ENCODE measurements at regions of chr15 and their contacts with region 1.

Region 1: DNA sequence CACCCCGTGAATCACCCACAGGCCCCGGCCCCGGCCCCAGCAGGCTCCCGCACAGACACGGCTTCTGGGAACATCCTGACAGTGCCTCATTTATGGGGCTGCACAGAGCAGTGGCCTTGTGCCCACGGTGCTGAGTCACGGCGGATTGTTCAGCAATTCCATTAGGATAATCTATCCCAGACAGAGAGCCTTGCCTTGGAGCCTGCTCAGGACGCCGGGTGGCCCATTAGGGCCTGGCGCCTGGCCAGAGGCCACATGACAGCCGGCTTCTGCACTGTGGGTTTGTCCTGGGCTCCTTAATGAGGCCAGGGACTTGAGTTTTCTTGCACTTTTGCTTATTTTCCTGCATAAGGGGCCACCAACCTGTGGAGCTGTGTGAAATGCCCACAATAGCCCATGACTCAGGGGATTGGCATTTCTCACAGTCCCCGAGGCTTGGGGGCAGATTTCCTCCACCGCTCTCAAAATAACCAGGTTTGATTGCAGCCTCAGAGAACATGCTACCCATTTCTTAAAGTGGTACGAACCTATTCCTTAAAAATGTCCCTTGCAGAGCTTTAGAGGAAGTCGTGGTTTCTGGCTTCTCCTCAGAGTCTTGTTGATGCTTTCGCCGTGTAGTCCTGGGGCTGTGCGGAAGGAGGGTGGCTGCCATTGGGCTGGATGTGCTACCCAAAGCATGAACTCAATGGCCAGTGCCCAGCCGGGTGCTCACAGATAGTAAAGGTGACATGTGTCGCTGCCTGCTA is 19.0 kb downstream of the SYNM start:
- DNase-seq: peak; percentile 86
- ATAC-seq: peak; percentile 91
- H3K4me3 ChIP-seq: peak overlapping the region; percentile 27 to 51
- H3K27ac ChIP-seq: peak overlapping the region; percentile 99
- H3K4me1 ChIP-seq: peaks cover 31 to 39% of the 10 kb centered on the region in 2 experiments
- H3K27me3 ChIP-seq: no peaks in the 10 kb centered on the region
- CTCF ChIP-seq: no peak
- POLR2A ChIP-seq: no peak
- RAD21 ChIP-seq: no peak; the same call in 1 of the 2 replicates

Region 2: GRCh38 chr15:99059010-99059981 is 64.6 kb before region 1 on chr15:
- CTCF ChIA-PET with region 1: no interaction called
- POLR2A ChIA-PET with region 1: no interaction called
- RAD21 ChIA-PET with region 1: no interaction called
- intact Hi-C with region 1: loop called (anchors 1 kb)
- DNase-seq: peak; percentile 6
- ATAC-seq: peak; percentile 96
- H3K4me3 ChIP-seq: peak overlapping the region; percentile 28 to 39; a peak in 2 of 4 replicates
- H3K27ac ChIP-seq: no peak overlapping the region
- H3K4me1 ChIP-seq: peaks cover 0 to 9% of the 10 kb centered on the region in 2 experiments; a peak in 1 of 4 replicates
- H3K27me3 ChIP-seq: peaks cover 5% of the 10 kb centered on the region; the same call in 1 of the 2 replicates
- CTCF ChIP-seq: peak; percentile 14 to 58 (median 57); a peak in 4 of 6 replicates
- POLR2A ChIP-seq: no peak
- RAD21 ChIP-seq: peak; percentile 43

Region 3: GRCh38 chr15:99213187-99213811 is 89.4 kb after region 1 on chr15:
- CTCF ChIA-PET with region 1: no interaction called
- POLR2A ChIA-PET with region 1: no interaction called
- RAD21 ChIA-PET with region 1: no interaction called
- intact Hi-C with region 1: loop called (anchors 5 kb)
- DNase-seq: peak; percentile 32
- ATAC-seq: peak; percentile 86
- H3K4me3 ChIP-seq: no peak overlapping the region
- H3K27ac ChIP-seq: no peak overlapping the region
- H3K4me1 ChIP-seq: no peaks in the 10 kb centered on the region
- H3K27me3 ChIP-seq: no peaks in the 10 kb centered on the region
- CTCF ChIP-seq: peak; percentile 85 to 97 (median 93)
- POLR2A ChIP-seq: no peak
- RAD21 ChIP-seq: peak; percentile 95

Region 4: DNA sequence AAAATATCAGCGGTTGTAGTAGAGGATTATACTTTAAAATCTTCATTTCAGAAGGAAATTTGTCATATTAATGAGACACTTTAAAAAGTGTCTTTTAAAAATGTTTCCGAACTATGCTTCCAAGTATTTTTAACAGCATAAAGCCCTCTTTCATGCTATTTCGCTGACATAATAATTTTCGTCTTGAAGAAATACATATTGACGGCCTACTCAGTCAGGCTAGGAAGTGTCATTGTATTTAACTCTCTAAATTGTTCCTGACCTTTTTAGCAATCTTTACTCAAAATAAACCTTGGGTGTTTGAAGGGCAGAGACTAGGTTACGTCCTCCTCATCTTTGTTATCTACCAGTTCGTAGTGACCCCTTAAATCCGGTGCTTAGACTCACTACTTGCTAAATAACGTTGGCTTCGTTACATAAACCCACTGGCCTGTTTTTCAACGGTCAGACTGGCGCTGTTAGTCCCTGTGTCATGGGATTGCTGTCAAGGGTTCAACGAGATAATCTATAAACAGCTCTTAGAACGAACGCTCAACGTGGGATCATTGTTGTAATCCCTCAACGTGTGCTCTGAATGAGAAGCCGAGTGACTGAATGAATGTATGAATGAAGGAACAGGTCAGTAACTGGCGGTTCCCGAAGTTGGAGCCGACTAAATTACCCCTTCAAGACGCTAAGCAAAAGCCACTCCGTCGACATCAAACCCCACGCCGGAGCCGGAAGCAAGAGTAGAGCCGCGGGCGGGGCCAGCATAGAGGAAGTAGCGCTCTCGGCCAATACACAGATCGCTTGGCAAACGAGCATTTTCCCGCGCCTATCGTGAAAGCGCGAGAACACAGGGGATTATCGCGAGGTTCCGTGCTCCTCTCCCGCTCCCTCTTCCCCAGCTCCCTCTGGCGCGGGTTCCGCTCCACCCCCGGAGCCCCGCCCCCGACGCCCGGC is 126.9 kb after region 1 on chr15:
- CTCF ChIA-PET with region 1: no interaction called
- POLR2A ChIA-PET with region 1: no interaction called
- RAD21 ChIA-PET with region 1: no interaction called
- intact Hi-C with region 1: loop called (anchors 1 kb)
- DNase-seq: peak; percentile 97
- ATAC-seq: peak; percentile 97
- H3K4me3 ChIP-seq: peak overlapping the region; percentile 77 to 83
- H3K27ac ChIP-seq: peak overlapping the region; percentile 70
- H3K4me1 ChIP-seq: peaks cover 11 to 27% of the 10 kb centered on the region in 2 experiments; a peak in 3 of 4 replicates
- H3K27me3 ChIP-seq: no peaks in the 10 kb centered on the region
- CTCF ChIP-seq: no peak
- POLR2A ChIP-seq: no peak
- RAD21 ChIP-seq: no peak

Measured in HCT116 (cell line).